Common myeloid progenitor, CD34-positive (primary cell): ENCODE measurements at regions of chr3 and their contacts with region 1.

Region 1: DNA sequence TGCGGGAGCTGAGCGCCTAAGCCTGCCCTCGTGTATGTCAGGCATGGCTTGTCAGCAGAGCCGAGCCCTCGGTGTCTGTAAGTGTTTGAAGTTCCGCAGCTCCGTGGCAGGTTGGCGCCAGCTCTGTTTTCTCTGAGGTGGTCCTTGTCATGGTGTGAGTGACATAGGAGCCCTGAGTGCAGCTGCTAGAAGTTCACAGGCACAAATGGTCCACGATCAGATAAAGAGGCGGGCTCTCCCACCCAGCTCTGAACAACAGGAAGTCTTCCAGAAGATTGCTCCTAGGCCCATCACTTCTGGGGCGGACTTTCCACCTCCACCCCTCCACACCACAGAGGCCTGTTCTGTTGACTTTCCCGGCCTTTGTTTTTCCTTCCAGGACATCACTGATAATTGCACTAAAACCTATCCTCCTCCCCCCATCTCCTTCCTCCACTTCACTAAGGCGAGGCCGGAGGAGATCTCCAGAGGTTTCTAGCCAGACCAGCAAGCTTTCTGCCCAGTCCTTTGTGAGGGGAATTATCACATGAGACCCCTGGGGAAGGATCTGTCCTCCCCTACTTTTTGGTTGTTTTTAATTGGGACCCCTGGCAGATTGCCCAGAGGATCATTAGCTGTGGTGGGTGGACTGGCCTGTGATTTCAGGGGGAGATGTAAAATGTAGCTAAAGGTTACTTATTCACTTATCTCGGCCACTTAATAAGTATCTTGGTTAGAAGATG is 19.9 kb downstream of the ITPR1 start:
- DNase-seq: peak in 1 of 3 donors; percentile 72
- H3K4me3 ChIP-seq: peak overlapping the region in 1 of 7 experiments; percentile 0
- H3K27ac ChIP-seq: peak overlapping the region in 1 of 2 experiments; percentile 39
- H3K4me1 ChIP-seq: peaks cover 18 to 76% (median 56%) of the 10 kb centered on the region in 4 experiments
- H3K27me3 ChIP-seq: no peaks in the 10 kb centered on the region

Region 2: GRCh38 chr3:4524088-4525023 is 11.3 kb after region 1 on chr3:
- CTCF ChIA-PET with region 1: interaction called, 80 read pairs
- POLR2A ChIA-PET with region 1: no interaction called
- DNase-seq: peak in 1 of 3 donors; percentile 36
- H3K4me3 ChIP-seq: peak overlapping the region in 1 of 7 experiments; percentile 29
- H3K27ac ChIP-seq: no peak overlapping the region
- H3K4me1 ChIP-seq: peaks cover 24 to 59% (median 41%) of the 10 kb centered on the region in 4 experiments
- H3K27me3 ChIP-seq: no peaks in the 10 kb centered on the region

Region 3: GRCh38 chr3:4533489-4534443 is 20.7 kb after region 1 on chr3:
- CTCF ChIA-PET with region 1: interaction called, 53 read pairs
- POLR2A ChIA-PET with region 1: interaction called, 3 read pairs
- DNase-seq: peak; percentile 93 to 99 (median 97)
- H3K4me3 ChIP-seq: peak overlapping the region in 5 of 7 experiments; percentile 16 to 57 (median 54)
- H3K27ac ChIP-seq: peak overlapping the region; percentile 69 to 83
- H3K4me1 ChIP-seq: peaks cover 20 to 74% (median 59%) of the 10 kb centered on the region in 4 experiments
- H3K27me3 ChIP-seq: no peaks in the 10 kb centered on the region

Region 4: GRCh38 chr3:4584456-4585249 is 71.6 kb after region 1 on chr3:
- CTCF ChIA-PET with region 1: interaction called, 26 read pairs
- POLR2A ChIA-PET with region 1: no interaction called
- DNase-seq: peak; percentile 63 to 82 (median 80)
- H3K4me3 ChIP-seq: peak overlapping the region in 6 of 7 experiments; percentile 30 to 78 (median 61)
- H3K27ac ChIP-seq: peak overlapping the region; percentile 29 to 82
- H3K4me1 ChIP-seq: peaks cover 0 to 84% (median 60%) of the 10 kb centered on the region in 4 experiments
- H3K27me3 ChIP-seq: no peaks in the 10 kb centered on the region